ENCODE measurements at regions of chr11 and their contacts with region 1.

Region 1: DNA sequence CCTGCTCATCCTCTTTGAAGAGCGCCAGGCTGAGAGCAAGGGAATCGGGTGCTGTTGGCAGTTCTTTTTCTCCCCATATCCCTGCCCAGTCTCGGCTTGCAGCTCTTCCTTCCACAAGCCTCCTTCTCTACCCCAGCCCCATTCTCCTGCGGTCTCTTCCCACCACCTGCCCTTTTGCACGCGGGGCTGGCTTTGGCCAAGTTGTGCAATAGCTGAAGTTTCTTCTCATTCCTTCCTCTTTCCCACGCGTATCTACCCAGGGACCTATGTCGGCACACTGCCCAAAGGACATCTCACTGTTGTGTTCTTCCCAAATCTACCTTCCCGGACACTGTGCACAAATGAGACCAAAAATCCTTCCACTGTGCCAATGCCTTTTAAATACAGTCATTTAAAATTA is 22.3 kb upstream of the HTR3A start:
- DNase-seq: no peak
- H3K4me3 ChIP-seq: no peak overlapping the region
- H3K27ac ChIP-seq: no peak overlapping the region
- H3K4me1 ChIP-seq: no peaks in the 10 kb centered on the region
- H3K27me3 ChIP-seq: peaks cover 99% of the 10 kb centered on the region
- CTCF ChIP-seq: no peak

Region 2: DNA sequence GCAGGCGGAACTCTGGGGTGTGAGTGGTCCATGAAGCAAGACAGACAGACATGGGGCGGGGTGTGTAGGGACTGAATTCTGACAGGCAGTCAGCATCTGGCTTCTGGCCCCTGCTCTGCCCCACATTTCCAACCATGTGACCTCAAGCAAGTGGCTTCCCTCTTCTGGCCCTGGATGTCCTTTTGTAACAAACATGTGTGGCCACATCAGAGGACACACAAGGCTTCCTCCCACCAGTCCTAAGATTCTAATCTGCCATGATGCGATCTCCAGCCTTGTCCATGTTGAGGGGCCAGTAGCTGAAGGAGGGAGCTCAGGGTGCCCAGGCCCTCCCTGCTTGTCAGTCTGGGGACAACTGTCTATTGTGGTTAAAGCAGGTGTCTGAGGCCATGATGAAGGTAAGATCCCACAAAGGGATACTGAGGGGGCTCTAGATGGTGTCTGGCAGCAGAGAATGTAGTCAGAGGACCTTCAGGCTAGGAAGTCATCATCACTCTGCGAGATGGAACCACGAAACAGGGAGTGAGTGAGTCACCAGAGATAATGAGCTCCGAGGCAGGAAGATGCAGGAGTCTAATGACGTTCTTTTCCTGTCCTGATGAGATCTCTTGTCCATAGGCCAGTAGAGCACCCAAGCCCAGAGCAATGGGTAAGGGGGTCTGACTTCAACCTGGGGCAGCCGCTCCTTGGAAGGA is 504.8 kb before region 1 on chr11:
- CTCF ChIA-PET with region 1: no interaction called
- POLR2A ChIA-PET with region 1: no interaction called
- intact Hi-C with region 1: no loop called
- DNase-seq: no peak
- H3K4me3 ChIP-seq: no peak overlapping the region
- H3K27ac ChIP-seq: no peak overlapping the region
- H3K4me1 ChIP-seq: no peaks in the 10 kb centered on the region
- H3K27me3 ChIP-seq: peaks cover 90% of the 10 kb centered on the region
- CTCF ChIP-seq: no peak

Region 3: GRCh38 chr11:113789675-113790320 is 162.8 kb before region 1 on chr11:
- CTCF ChIA-PET with region 1: no interaction called
- POLR2A ChIA-PET with region 1: no interaction called
- intact Hi-C with region 1: no loop called
- DNase-seq: no peak
- H3K4me3 ChIP-seq: no peak overlapping the region
- H3K27ac ChIP-seq: no peak overlapping the region
- H3K4me1 ChIP-seq: no peaks in the 10 kb centered on the region
- H3K27me3 ChIP-seq: peaks cover 36% of the 10 kb centered on the region
- CTCF ChIP-seq: no peak

Region 4: GRCh38 chr11:113806406-113806805 is 146.2 kb before region 1 on chr11:
- CTCF ChIA-PET with region 1: interaction called, 12 read pairs
- POLR2A ChIA-PET with region 1: no interaction called
- intact Hi-C with region 1: no loop called
- DNase-seq: peak in 1 of 2 experiments; percentile 5
- H3K4me3 ChIP-seq: no peak overlapping the region
- H3K27ac ChIP-seq: no peak overlapping the region
- H3K4me1 ChIP-seq: no peaks in the 10 kb centered on the region
- H3K27me3 ChIP-seq: no peaks in the 10 kb centered on the region
- CTCF ChIP-seq: peak; percentile 61

Region 5: DNA sequence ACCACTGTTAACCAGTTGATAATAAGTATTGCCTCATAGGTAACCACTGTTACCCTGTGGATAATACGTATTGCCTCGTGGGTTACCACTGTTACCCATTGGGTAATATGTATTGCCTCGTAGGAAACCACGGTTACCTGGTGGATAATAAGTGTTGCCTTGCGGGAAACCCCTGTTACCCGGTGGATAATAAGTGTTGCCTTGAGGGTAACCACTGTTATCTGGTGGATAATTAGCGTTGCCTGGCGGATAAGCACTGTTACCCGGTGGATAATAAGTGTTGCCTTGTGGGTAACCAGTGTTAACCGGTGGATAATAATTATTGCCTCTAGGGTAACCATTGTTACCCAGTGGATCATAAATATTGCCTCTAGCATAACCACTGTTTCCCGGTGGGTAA is 670.3 kb after region 1 on chr11:
- CTCF ChIA-PET with region 1: no interaction called
- POLR2A ChIA-PET with region 1: no interaction called
- intact Hi-C with region 1: no loop called
- DNase-seq: no peak
- H3K4me3 ChIP-seq: no peak overlapping the region
- H3K27ac ChIP-seq: no peak overlapping the region
- H3K4me1 ChIP-seq: no peaks in the 10 kb centered on the region
- H3K27me3 ChIP-seq: 0 out of 2 replicates have a peak, but pooled peaks cover 4% of the 10 kb centered on the region
- CTCF ChIP-seq: no peak

Measured in PC-9 (cell line).